ENCODE measurements at regions of chr14 and their contacts with region 1.

Region 1: DNA sequence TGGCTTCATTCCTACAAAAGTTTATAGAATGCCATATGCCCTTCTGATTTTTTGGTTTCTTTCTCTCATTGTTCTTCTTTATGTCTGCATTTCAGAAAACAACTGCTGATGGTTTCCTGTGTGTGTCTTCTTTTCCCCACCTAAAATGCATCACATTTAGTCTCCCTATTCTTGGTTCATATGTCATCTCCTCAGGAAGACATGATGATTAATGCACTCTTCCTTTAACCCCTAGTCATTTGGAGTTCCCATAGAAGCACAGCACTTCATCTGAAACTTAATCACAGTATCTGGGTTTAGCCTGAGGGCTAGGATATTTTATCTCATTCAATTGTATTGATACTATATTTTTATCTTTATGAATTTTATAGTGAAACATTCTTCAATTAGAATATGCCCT is 21.5 kb downstream of the GNPNAT1 start:
- DNase-seq: no peak
- H3K4me3 ChIP-seq: no peak overlapping the region
- H3K4me3 Mint-ChIP-seq: no peak overlapping the region
- H3K27ac Mint-ChIP-seq: no peak overlapping the region
- H3K4me1 ChIP-seq: no peaks in the 10 kb centered on the region; the same call in 1 of the 2 replicates
- H3K4me1 Mint-ChIP-seq: no peaks in the 10 kb centered on the region
- H3K27me3 ChIP-seq: no peaks in the 10 kb centered on the region
- H3K27me3 Mint-ChIP-seq: no peaks in the 10 kb centered on the region
- CTCF ChIP-seq: no peak

Region 2: DNA sequence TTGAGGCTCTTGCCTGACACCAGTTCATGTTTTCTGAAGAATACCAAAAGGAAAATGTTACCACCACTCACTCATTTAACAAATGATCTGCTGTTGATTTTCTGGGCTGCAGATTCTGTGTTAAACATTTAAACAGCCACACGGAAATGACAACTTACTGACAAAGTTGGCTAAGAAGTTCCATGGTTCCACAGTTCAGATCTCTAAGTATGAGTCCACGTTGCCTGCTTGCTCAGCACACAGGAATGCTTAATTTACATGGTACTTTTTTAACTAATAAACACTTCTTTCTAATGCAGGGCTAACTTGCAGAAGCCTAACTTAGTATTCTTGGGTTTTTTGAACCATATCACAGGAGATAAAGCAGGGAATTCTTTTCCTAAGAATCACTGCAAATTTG is 421.1 kb before region 1 on chr14:
- CTCF ChIA-PET with region 1: no interaction called
- POLR2A ChIA-PET with region 1: no interaction called
- intact Hi-C with region 1: loop called (anchors 10 kb)
- DNase-seq: no peak
- H3K4me3 ChIP-seq: no peak overlapping the region
- H3K4me3 Mint-ChIP-seq: no peak overlapping the region
- H3K27ac Mint-ChIP-seq: no peak overlapping the region
- H3K4me1 ChIP-seq: no peaks in the 10 kb centered on the region
- H3K4me1 Mint-ChIP-seq: peaks cover 6% of the 10 kb centered on the region
- H3K27me3 ChIP-seq: no peaks in the 10 kb centered on the region
- H3K27me3 Mint-ChIP-seq: no peaks in the 10 kb centered on the region
- CTCF ChIP-seq: no peak

Region 3: GRCh38 chr14:52663850-52664249 is 106.0 kb before region 1 on chr14:
- CTCF ChIA-PET with region 1: no interaction called
- POLR2A ChIA-PET with region 1: no interaction called
- intact Hi-C with region 1: no loop called
- DNase-seq: no peak
- H3K4me3 ChIP-seq: no peak overlapping the region
- H3K4me3 Mint-ChIP-seq: no peak overlapping the region
- H3K27ac Mint-ChIP-seq: no peak overlapping the region
- H3K4me1 ChIP-seq: no peaks in the 10 kb centered on the region
- H3K4me1 Mint-ChIP-seq: no peaks in the 10 kb centered on the region
- H3K27me3 ChIP-seq: no peaks in the 10 kb centered on the region
- H3K27me3 Mint-ChIP-seq: no peaks in the 10 kb centered on the region
- CTCF ChIP-seq: no peak